A673 (cell line): ENCODE measurements at regions of chr9 and their contacts with region 1.

Region 1: DNA sequence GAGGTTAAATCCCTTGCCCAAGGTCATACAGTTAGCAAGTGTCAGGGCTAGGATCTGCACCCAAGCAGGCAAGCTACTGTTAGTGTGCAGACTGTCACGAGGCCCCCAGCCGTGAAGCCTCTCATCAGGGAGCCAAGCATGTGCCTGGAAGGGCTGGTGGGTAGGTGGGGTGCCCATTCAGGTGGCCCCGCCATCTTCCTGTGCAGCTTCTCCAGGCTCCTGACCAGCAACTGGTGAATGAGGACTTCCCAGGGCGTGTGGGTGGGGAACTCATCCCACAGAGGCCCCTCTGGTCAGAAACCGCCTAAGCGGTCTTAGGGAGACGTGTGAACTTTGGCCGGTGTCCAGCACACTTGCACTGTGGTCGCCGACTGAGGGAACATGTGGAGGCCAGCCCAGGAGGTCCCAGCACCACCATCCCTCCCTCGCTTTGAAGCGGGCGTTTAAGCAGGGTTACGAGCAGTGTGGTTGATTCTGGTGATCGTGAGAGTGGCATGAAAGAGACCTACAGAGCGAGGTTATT is 77.8 kb downstream of the MVB12B start:
- DNase-seq: no peak
- H3K4me3 ChIP-seq: no peak overlapping the region
- H3K27ac ChIP-seq: no peak overlapping the region
- H3K4me1 ChIP-seq: no peaks in the 10 kb centered on the region
- H3K27me3 ChIP-seq: no peaks in the 10 kb centered on the region
- CTCF ChIP-seq: no peak

Region 2: GRCh38 chr9:126301985-126302603 is 102.3 kb before region 1 on chr9:
- CTCF ChIA-PET with region 1: interaction called, 12 read pairs
- POLR2A ChIA-PET with region 1: no interaction called
- intact Hi-C with region 1: no loop called
- DNase-seq: peak; percentile 68
- H3K4me3 ChIP-seq: no peak overlapping the region
- H3K27ac ChIP-seq: no peak overlapping the region
- H3K4me1 ChIP-seq: no peaks in the 10 kb centered on the region
- H3K27me3 ChIP-seq: no peaks in the 10 kb centered on the region
- CTCF ChIP-seq: peak; percentile 80